Activated B cell treated with CpG ODN at 0.5 μM for 24 hours (primary cell): ENCODE measurements at regions of chr1 and their contacts with region 1.

Region 1: GRCh38 chr1:26993237-26994019 is at the start of gene TRNP1:
- DNase-seq: peak; percentile 68
- ATAC-seq: peak; percentile 71
- H3K4me3 Mint-ChIP-seq: peak within 1 kb of the TSS; percentile 81
- H3K27ac Mint-ChIP-seq: no peak within 1 kb of the TSS
- H3K4me1 Mint-ChIP-seq: peaks cover 20% of the 10 kb centered on the region
- H3K27me3 Mint-ChIP-seq: peaks cover 33% of the 10 kb centered on the region
- CTCF ChIP-seq: no peak
- total RNA-seq, gene TRNP1: 0.24 and 0.44 TPM in 2 replicates

Region 2: DNA sequence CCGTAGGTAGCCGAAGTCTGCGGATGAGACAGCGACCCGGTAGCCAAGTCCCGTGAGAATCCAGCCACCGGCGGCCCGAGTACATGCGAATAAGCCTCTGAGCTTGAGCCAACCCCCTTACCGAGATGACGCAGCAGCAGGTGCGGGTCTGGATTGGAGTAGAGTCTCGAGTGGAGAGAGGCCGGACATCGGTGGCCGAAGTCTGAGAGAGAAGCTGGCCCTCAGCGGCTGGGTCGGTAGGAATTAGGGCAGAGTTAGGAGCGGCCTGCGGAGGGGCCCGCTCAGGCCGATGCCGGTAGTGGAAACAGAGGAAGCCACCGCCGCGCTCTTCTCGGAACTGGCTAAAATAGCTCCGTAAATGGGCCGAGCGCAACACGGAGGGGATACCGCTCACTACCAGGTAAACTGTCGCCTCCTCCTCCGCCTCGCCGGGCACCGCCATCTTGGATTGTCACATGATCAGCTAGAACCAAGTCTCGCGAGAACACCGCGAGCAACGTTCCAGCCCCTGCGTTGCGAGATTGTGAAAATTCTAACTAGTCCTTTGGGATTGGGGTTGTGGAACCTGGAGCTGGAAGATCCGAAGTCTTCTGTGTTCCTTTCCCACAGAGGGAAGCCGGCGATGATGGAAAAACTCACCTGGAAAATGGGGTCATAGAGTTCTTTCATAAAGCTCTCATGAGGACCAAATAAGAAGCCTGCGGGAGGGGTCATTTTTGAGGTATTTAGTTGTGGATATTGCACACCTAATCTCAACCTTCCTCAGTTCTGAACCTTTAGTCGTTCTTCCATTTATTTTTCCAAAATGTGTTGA is 93.2 kb before region 1 on chr1 and contains the start of gene GPATCH3:
- CTCF ChIA-PET with region 1: no interaction called
- POLR2A ChIA-PET with region 1: no interaction called
- intact Hi-C with region 1: loop called (anchors 1 kb)
- DNase-seq: peak; percentile 68
- ATAC-seq: peak; percentile 89
- H3K4me3 Mint-ChIP-seq: peak within 1 kb of the TSS; percentile 99
- H3K27ac Mint-ChIP-seq: peak within 1 kb of the TSS; percentile 100
- H3K4me1 Mint-ChIP-seq: peaks cover 32% of the 10 kb centered on the region
- H3K27me3 Mint-ChIP-seq: no peaks in the 10 kb centered on the region
- CTCF ChIP-seq: no peak
- total RNA-seq, gene GPATCH3: 24.0 and 26.0 TPM in 2 replicates

Region 3: DNA sequence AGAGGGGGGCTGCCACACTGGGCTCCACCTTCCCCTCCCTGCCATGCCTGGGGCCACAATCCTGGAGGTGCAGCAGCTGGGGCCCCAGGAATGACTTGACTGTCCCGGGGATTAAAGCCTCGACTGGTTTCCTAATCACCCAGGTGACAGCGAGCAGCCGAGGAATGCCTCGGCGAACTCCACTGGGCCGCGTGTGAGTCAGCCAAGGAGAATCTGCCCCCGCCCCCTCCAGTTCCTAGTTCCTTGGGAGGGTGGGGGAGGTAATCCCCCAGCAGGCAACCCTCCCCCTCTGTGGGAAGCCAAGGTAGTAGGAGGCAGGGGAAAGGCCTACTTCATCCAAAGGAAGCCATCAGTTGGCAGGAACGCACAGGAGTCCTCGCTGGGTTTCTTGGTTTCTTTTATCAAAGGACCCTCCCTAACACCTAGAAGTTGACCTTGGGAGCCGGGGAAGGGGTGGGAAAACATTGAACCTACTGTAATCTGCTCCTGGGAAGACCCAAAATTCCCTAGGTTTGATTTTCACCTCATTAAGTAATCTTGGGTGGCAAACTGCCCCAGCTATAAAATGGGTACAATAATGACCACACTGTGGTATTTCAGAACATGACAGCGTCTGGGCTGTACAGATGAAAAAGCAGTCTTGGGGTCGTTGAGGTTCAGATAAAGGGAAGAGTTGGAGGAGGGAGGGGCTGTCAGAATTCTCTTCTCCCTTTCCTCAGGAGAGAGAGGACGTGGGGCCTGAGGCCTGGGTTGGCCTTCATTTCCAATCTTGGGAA is 17.7 kb after region 1 on chr1:
- CTCF ChIA-PET with region 1: interaction called, 3 read pairs
- POLR2A ChIA-PET with region 1: interaction called, 3 read pairs
- intact Hi-C with region 1: loop called (anchors 1 kb)
- DNase-seq: no peak
- ATAC-seq: no peak
- H3K4me3 Mint-ChIP-seq: no peak overlapping the region
- H3K27ac Mint-ChIP-seq: no peak overlapping the region
- H3K4me1 Mint-ChIP-seq: peaks cover 17% of the 10 kb centered on the region
- H3K27me3 Mint-ChIP-seq: peaks cover 9% of the 10 kb centered on the region
- CTCF ChIP-seq: no peak